ENCODE measurements at regions of chr9 and their contacts with region 1.

Region 1: DNA sequence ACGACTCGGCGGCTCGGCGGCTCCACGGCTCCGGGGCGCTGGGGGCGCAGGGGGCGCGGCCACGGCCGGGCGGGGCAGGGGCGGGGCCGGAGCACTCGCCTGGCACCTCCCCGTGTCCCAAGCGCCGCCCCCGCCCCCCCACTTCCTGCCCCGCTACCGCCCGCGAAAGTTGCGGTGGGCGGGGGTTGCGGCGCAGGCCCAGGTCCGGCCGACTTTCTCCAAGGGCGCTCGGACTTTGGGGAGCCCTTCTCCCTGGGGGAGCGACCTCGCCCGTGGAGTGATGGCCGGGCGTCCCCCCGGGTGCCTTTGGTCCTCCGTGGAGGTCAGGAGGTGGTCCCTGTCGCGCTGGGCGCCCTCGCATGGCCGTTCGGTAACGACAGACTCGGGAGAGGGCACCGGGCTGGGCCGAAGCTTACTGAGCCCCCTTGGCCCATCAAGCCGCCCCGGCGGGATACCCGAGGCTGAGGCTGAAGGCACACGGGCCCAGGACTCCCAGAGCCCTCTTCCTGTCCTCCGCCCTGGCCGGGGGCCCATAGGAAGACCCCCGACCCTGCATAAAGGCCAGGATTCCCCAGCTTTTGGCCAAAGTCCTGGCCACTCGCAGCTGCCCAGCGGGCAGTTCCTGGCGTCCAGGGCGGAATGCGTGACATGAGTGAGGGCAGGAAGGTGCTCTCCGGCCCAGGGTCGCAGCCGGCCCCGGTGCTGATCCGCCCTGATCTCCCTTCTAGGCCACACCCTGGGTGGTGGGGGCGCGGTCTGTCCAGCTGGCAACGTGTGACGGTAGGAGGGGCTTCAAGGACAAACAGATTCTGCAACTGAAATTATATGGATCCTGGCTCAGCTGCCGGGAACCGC is 883 bp upstream of the VAV2 start:
- DNase-seq: peak; percentile 70
- H3K4me3 ChIP-seq: peak overlapping the region; percentile 51 to 70 (median 67)
- H3K27ac ChIP-seq: peak overlapping the region; percentile 76
- H3K4me1 ChIP-seq: peaks cover 15% of the 10 kb centered on the region
- H3K27me3 ChIP-seq: no peaks in the 10 kb centered on the region
- CTCF ChIP-seq: peak; percentile 25 to 61
- POLR2A ChIP-seq: no peak

Region 2: GRCh38 chr9:133532937-133533668 is 459.9 kb before region 1 on chr9:
- CTCF ChIA-PET with region 1: interaction called, 10 read pairs
- POLR2A ChIA-PET with region 1: no interaction called
- dilution Hi-C with region 1: no loop called
- intact Hi-C with region 1: loop called (anchors 1 kb)
- DNase-seq: peak; percentile 26
- H3K4me3 ChIP-seq: no peak overlapping the region
- H3K27ac ChIP-seq: no peak overlapping the region
- H3K4me1 ChIP-seq: no peaks in the 10 kb centered on the region
- H3K27me3 ChIP-seq: peaks cover 9 to 15% of the 10 kb centered on the region in 2 experiments
- CTCF ChIP-seq: peak; percentile 42 to 64
- POLR2A ChIP-seq: no peak

Region 3: GRCh38 chr9:133782157-133783130 is 210.6 kb before region 1 on chr9:
- CTCF ChIA-PET with region 1: interaction called, 232 read pairs
- POLR2A ChIA-PET with region 1: interaction called, 6 read pairs
- dilution Hi-C with region 1: no loop called
- intact Hi-C with region 1: loop called (anchors 1 kb)
- DNase-seq: peak; percentile 68
- H3K4me3 ChIP-seq: no peak overlapping the region
- H3K27ac ChIP-seq: no peak overlapping the region
- H3K4me1 ChIP-seq: no peaks in the 10 kb centered on the region
- H3K27me3 ChIP-seq: no peaks in the 10 kb centered on the region
- CTCF ChIP-seq: peak; percentile 84 to 86
- POLR2A ChIP-seq: no peak

Region 4: DNA sequence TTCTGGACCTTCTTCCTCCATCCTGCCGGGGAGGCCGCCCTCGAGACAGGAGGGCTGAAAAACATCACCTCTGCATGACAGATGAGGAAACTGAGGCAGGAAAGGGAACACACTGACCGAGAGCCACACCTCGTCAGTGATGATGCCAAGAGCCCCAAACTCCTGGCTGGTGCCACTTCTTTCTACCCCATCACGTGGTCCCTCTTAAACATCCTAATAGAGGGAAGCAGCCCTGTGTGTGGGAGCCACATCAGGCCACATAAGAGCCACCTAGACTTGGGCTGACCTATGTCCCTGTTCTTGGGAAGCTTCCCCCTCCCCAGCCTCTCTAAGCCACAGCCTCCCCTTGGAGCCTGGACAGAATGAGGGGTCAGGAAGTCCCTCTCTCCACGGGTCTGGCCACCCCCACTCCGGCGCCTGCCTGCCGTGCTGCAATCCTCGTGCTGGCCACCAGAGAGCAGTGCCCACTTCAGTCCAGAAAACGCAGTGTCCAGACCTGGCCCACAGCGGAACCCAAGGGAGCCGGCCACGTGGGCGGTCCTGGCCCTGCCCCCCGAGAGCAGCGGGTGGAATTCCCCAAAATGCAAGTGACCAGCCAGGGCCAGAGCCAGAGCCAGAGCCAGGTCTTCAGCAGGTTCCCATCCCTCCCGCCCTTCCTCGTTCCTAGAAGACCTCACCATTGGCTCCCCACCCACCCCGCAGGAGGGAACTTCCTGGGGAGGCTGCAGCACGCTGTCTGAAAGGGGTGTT is 200.1 kb before region 1 on chr9:
- CTCF ChIA-PET with region 1: interaction called, 92 read pairs
- POLR2A ChIA-PET with region 1: interaction called, 3 read pairs
- dilution Hi-C with region 1: no loop called
- intact Hi-C with region 1: loop called (anchors 1 kb)
- DNase-seq: peak; percentile 63
- H3K4me3 ChIP-seq: no peak overlapping the region
- H3K27ac ChIP-seq: no peak overlapping the region
- H3K4me1 ChIP-seq: peaks cover 25% of the 10 kb centered on the region
- H3K27me3 ChIP-seq: no peaks in the 10 kb centered on the region
- CTCF ChIP-seq: peak; percentile 96 to 97
- POLR2A ChIP-seq: no peak

Region 5: GRCh38 chr9:133845440-133845839 is 147.6 kb before region 1 on chr9:
- CTCF ChIA-PET with region 1: interaction called, 13 read pairs
- POLR2A ChIA-PET with region 1: no interaction called
- dilution Hi-C with region 1: no loop called
- intact Hi-C with region 1: loop called (anchors 5 kb)
- DNase-seq: peak; percentile 86
- H3K4me3 ChIP-seq: no peak overlapping the region
- H3K27ac ChIP-seq: peak overlapping the region; percentile 92
- H3K4me1 ChIP-seq: peaks cover 24% of the 10 kb centered on the region
- H3K27me3 ChIP-seq: no peaks in the 10 kb centered on the region
- CTCF ChIP-seq: no peak
- POLR2A ChIP-seq: no peak

Region 6: DNA sequence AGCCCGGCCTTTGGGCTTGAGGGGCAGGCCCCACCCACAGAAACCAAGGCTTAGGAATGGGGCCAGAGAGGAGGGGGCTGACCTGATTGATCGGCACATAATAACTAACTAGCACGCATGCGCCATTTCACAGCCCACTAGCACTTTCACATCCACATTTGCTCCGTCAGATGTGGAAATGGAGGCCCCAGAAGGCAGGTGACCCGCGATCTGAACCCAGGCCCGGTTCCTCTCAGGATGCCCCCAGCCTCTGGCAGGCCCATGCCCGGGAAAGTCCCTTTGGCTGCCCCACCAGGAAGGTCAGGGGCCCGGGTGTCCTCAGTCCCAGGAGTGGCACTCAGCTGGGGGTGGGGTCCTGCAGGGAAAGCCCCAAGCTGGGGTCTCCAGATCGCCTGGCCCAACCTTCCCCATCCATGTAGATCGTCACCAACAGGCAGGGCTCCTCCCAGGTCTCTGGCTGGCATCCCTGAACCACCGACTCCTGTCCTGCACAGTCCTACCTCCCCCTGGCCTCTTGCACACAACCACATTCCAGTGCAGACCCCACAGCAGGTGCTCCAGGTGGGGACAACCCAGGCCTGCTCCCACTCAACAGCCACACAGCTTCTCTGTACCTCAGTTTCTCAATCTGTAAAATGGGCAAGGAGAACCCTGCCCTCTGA is 47.6 kb before region 1 on chr9:
- CTCF ChIA-PET with region 1: interaction called, 18 read pairs
- POLR2A ChIA-PET with region 1: interaction called, 4 read pairs
- dilution Hi-C with region 1: no loop called
- intact Hi-C with region 1: loop called (anchors 2 kb)
- DNase-seq: no peak
- H3K4me3 ChIP-seq: no peak overlapping the region
- H3K27ac ChIP-seq: peak overlapping the region; percentile 76
- H3K4me1 ChIP-seq: peaks cover 32% of the 10 kb centered on the region
- H3K27me3 ChIP-seq: no peaks in the 10 kb centered on the region
- CTCF ChIP-seq: no peak
- POLR2A ChIP-seq: no peak

Region 7: GRCh38 chr9:134024828-134025605 is 32.0 kb after region 1 on chr9 and contains the start of gene BRD3OS:
- CTCF ChIA-PET with region 1: interaction called, 24 read pairs
- POLR2A ChIA-PET with region 1: interaction called, 5 read pairs
- dilution Hi-C with region 1: no loop called
- intact Hi-C with region 1: loop called (anchors 2 kb)
- DNase-seq: peak; percentile 98
- H3K4me3 ChIP-seq: peak within 1 kb of the TSS; percentile 62 to 84 (median 76)
- H3K27ac ChIP-seq: no peak within 1 kb of the TSS
- H3K4me1 ChIP-seq: peaks cover 5% of the 10 kb centered on the region
- H3K27me3 ChIP-seq: no peaks in the 10 kb centered on the region
- CTCF ChIP-seq: no peak
- POLR2A ChIP-seq: peak; percentile 43
- total RNA-seq, gene BRD3OS: 15.4 and 18.2 TPM in 2 replicates